Psoas muscle (tissue), 8 donors: ENCODE measurements at regions of chr16 and their contacts with region 1.

Region 1: GRCh38 chr16:47141773-47142485 is 1.8 kb downstream of the NETO2 start:
- DNase-seq: peak; percentile 75 to 85
- ATAC-seq: peak; percentile 81 to 91 (median 89)
- H3K4me3 ChIP-seq: peak overlapping the region; percentile 74
- H3K27ac ChIP-seq: no peak overlapping the region
- H3K4me1 ChIP-seq: no peaks in the 10 kb centered on the region
- H3K27me3 ChIP-seq: no peaks in the 10 kb centered on the region
- CTCF ChIP-seq: peak; percentile 92

Region 2: DNA sequence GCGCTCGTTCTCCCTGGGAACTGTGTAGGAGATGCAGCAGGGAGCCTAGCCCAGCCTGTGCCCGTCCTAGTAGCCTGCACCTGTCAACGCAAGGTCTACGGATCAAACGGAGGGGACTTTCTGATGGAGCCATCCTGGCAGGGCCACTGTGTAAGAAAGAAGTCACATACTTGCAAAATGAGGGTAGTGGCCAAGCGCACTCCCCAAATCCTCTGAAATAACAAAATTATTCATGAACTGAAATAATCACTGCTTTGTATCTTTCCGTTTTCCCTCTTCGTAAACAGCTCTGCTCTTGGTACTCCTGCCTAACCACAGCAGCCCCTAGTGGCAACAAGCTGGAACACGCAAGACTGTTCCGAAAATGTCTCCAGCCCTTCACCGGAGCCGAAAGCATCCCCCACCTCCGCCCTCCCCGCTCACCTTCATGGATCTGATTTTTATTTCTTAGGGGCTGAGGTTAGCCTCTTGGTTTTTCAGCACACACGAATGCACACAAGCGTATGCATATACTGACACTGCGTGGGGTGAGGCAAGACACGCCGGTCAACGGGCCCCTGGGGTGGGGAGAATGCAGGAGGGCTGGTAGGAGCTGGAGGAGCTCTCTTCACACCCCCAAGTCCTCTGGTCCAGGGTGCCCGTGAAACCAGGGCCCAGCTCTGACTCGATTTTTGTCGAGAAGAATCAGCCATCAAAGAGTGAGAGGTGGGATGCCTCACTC is 913.1 kb after region 1 on chr16:
- intact Hi-C with region 1: loop called in 1 of 2 experiments (anchors 5 kb)
- DNase-seq: peak; percentile 16 to 59
- ATAC-seq: peak; percentile 71 to 82 (median 78)
- H3K4me3 ChIP-seq: peak overlapping the region; percentile 47
- H3K27ac ChIP-seq: no peak overlapping the region
- H3K4me1 ChIP-seq: peaks cover 9% of the 10 kb centered on the region
- H3K27me3 ChIP-seq: no peaks in the 10 kb centered on the region
- CTCF ChIP-seq: peak; percentile 73

Region 3: GRCh38 chr16:48156790-48157209 is 1014.9 kb after region 1 on chr16:
- intact Hi-C with region 1: loop called (anchors 2 to 5 kb)
- DNase-seq: peak; percentile 82 to 90
- ATAC-seq: peak; percentile 86 to 95 (median 89)
- H3K4me3 ChIP-seq: peak overlapping the region; percentile 39
- H3K27ac ChIP-seq: no peak overlapping the region
- H3K4me1 ChIP-seq: no peaks in the 10 kb centered on the region
- H3K27me3 ChIP-seq: no peaks in the 10 kb centered on the region
- CTCF ChIP-seq: peak; percentile 95